ENCODE measurements at regions of chr9 and their contacts with region 1.

Region 1: GRCh38 chr9:112717661-112718341 is at the start of gene INIP:
- DNase-seq: peak; percentile 95 to 97 (median 97)
- ATAC-seq: peak; percentile 98 to 99 (median 99)
- H3K4me3 ChIP-seq: peak within 1 kb of the TSS; percentile 71 to 98 (median 90)
- H3K27ac ChIP-seq: peak within 1 kb of the TSS; percentile 13 to 95 (median 90)
- H3K4me1 ChIP-seq: peaks cover 0 to 13% (median 8%) of the 10 kb centered on the region in 12 donors
- H3K27me3 ChIP-seq: no peaks in the 10 kb centered on the region
- CTCF ChIP-seq: peak in 4 of 12 donors; percentile 7 to 32 (median 18)
- POLR2A ChIP-seq: peak in 1 of 2 donors; percentile 70
- total RNA-seq, gene INIP: 7.7 to 18.2 (median 12.7) TPM

Region 2: GRCh38 chr9:112097712-112098688 is 619.8 kb before region 1 on chr9:
- intact Hi-C with region 1: loop called in 3 of 10 experiments (anchors 10 kb)
- DNase-seq: peak in 4 of 5 donors; percentile 47 to 68 (median 54)
- ATAC-seq: peak; percentile 42 to 86 (median 82)
- H3K4me3 ChIP-seq: no peak overlapping the region
- H3K27ac ChIP-seq: no peak overlapping the region
- H3K4me1 ChIP-seq: peaks cover 0 to 53% (median 0%) of the 10 kb centered on the region in 12 donors
- H3K27me3 ChIP-seq: no peaks in the 10 kb centered on the region
- CTCF ChIP-seq: peak; percentile 79 to 95 (median 90)
- POLR2A ChIP-seq: no peak

Region 3: GRCh38 chr9:112333639-112334431 is 384.0 kb before region 1 on chr9:
- intact Hi-C with region 1: loop called in 1 of 10 experiments (anchors 5 kb)
- DNase-seq: peak; percentile 94 to 98 (median 96)
- ATAC-seq: peak; percentile 93 to 97 (median 96)
- H3K4me3 ChIP-seq: peak overlapping the region; percentile 71 to 100 (median 86)
- H3K27ac ChIP-seq: peak overlapping the region; percentile 92 to 100 (median 98)
- H3K4me1 ChIP-seq: peaks cover 0 to 39% (median 14%) of the 10 kb centered on the region in 12 donors
- H3K27me3 ChIP-seq: no peaks in the 10 kb centered on the region
- CTCF ChIP-seq: peak; percentile 28 to 73 (median 60)
- POLR2A ChIP-seq: no peak

Region 4: GRCh38 chr9:112465352-112465751 is 252.4 kb before region 1 on chr9:
- intact Hi-C with region 1: loop called in 1 of 10 experiments (anchors 10 kb)
- DNase-seq: no peak
- ATAC-seq: no peak
- H3K4me3 ChIP-seq: no peak overlapping the region
- H3K27ac ChIP-seq: no peak overlapping the region
- H3K4me1 ChIP-seq: no peaks in the 10 kb centered on the region
- H3K27me3 ChIP-seq: no peaks in the 10 kb centered on the region
- CTCF ChIP-seq: no peak
- POLR2A ChIP-seq: no peak

Region 5: GRCh38 chr9:112620388-112620787 is 97.4 kb before region 1 on chr9:
- intact Hi-C with region 1: no loop called
- DNase-seq: no peak
- ATAC-seq: no peak
- H3K4me3 ChIP-seq: no peak overlapping the region
- H3K27ac ChIP-seq: no peak overlapping the region
- H3K4me1 ChIP-seq: peaks cover 0 to 11% (median 0%) of the 10 kb centered on the region in 12 donors
- H3K27me3 ChIP-seq: no peaks in the 10 kb centered on the region
- CTCF ChIP-seq: no peak
- POLR2A ChIP-seq: no peak

Region 6: GRCh38 chr9:112750111-112750767 is 32.4 kb after region 1 on chr9 and contains the start of gene SNX30:
- intact Hi-C with region 1: loop called in 4 of 10 experiments (anchors 1 to 5 kb)
- DNase-seq: peak; percentile 91 to 94 (median 92)
- ATAC-seq: peak; percentile 95 to 97 (median 96)
- H3K4me3 ChIP-seq: peak within 1 kb of the TSS; percentile 77 to 99 (median 96)
- H3K27ac ChIP-seq: peak within 1 kb of the TSS; percentile 60 to 95 (median 80)
- H3K4me1 ChIP-seq: peaks cover 0 to 61% (median 24%) of the 10 kb centered on the region in 12 donors
- H3K27me3 ChIP-seq: no peaks in the 10 kb centered on the region
- CTCF ChIP-seq: peak in 3 of 12 donors; percentile 19 to 34 (median 33)
- POLR2A ChIP-seq: peak in 1 of 2 donors; percentile 83
- total RNA-seq, gene SNX30: 3.2 to 10.3 (median 4.1) TPM

Region 7: DNA sequence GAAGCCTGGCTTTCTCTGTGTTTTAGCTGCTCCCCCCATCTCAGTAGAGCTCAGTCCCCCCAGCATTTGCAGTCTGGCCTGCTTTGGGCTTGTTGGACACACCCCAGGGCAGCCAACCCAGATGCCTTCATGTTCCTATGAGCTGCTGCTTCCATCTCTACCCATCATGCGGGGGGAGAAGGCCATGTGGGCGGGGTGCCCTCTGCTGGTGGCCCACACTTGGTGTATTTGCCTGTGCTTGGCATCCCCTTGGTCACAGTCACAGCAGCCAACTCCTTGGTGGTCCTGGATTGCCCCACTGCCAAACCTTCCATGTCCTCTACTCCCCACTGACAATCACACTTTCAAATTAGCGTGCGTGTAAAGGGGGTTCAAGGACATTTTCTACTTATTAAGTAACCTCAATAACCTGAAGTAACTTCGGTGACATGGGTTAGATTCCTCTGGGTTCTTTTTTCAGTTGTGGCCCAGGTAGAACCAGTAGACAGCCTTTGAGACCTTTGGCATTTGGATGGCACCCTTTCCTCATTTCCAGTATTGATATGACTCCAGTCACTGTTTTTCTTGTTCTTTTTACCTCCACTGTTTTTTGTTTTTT is 75.5 kb after region 1 on chr9:
- intact Hi-C with region 1: loop called in 2 of 10 experiments (anchors 10 kb)
- DNase-seq: peak; percentile 40 to 83 (median 59)
- ATAC-seq: peak in 3 of 4 donors; percentile 77 to 84 (median 83)
- H3K4me3 ChIP-seq: no peak overlapping the region
- H3K27ac ChIP-seq: no peak overlapping the region
- H3K4me1 ChIP-seq: peaks cover 0 to 8% (median 0%) of the 10 kb centered on the region in 12 donors
- H3K27me3 ChIP-seq: no peaks in the 10 kb centered on the region
- CTCF ChIP-seq: peak; percentile 36 to 65 (median 52)
- POLR2A ChIP-seq: no peak

Region 8: DNA sequence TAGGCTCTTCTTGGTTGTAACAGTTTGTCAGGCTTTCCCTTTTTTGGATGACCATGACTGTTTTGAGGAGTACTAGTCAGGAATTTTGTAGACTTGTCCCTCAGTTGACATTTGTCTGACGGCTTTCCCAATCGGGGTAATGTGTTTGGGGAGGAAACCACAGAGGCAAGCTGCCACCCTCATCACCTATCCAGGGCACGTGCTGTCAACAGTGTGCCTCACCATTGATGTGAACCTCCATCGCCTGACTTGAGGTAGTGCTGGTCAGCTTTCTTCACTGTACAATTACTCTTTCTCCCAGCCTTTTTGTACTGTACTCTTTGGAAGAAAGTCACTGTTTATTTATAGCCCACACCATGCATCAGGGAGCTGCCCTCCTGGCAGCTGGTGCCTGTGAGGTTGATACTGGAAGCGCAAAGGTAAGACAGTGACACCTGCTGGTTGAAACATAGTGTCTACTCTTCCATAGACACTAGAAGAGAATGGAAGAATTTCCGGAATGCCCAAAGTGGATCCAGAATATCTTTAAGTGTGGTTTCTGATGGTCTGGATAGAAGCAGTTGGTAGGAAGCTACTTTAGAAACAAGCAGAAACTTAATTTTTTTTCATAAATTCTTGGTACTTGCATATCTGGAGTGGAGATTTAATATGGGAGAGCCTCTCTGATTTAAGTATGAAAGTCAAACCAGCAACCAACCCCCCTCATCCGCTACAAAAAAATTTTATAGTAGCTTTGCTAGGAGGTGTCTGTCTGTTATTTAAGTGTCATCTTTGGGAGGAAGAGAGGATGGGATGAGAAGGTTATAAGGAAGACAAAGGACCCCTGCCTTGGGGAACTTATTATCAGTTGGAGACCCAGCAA is 102.1 kb after region 1 on chr9:
- intact Hi-C with region 1: loop called in 5 of 10 experiments (anchors 1 to 10 kb)
- DNase-seq: peak in 4 of 5 donors; percentile 54 to 75 (median 63)
- ATAC-seq: peak; percentile 89 to 98 (median 98)
- H3K4me3 ChIP-seq: no peak overlapping the region
- H3K27ac ChIP-seq: peak overlapping the region in 2 of 12 donors; percentile 16 to 20
- H3K4me1 ChIP-seq: peaks cover 0 to 24% (median 7%) of the 10 kb centered on the region in 12 donors
- H3K27me3 ChIP-seq: no peaks in the 10 kb centered on the region
- CTCF ChIP-seq: peak; percentile 54 to 80 (median 66)
- POLR2A ChIP-seq: no peak